ENCODE measurements at regions of chr12 and their contacts with region 1.

Region 1: DNA sequence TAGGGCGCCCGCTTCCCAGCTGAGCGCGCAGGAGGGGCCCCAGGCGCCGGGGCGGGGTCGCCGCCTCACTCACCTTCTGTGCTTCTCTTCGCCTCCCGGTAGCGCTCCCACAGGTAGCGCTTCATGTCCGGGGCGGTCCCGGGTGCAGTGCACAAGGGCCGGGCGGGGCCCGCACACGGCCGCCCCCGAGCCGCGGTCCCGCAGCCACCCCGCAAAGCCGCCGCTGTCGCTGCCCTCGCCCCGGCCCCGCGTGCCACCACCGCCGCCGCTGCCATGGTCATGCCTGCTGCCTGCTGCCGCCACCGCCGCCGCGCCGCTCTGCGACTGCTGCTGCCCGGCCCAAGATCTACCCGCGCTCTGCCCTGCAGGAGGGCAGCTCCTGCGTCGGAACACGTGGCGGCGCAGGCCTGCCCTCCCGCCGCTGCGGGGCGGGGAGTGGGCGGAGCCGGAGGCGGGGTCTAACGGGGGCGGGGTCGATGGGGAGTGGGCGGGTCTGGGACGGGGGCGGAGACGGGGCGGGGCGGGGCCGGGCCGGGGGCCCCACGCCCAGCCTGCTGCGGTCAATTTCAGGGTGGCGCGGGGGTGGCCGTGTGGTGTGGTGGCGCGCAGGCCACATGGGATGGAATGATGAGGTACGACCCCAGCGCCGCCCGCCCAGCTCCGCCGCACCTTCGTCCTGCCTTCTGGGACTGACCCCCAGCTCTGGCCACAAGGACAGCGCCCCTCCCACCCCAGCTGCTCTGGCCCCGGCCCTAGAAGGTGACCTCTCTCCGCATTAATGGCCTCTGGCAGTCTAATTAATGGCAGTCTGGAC is at the start of gene NT5DC3:
- DNase-seq: peak; percentile 91
- ATAC-seq: peak; percentile 88
- H3K4me3 Mint-ChIP-seq: peak within 1 kb of the TSS; percentile 77
- H3K27ac Mint-ChIP-seq: peak within 1 kb of the TSS; percentile 63
- H3K4me1 Mint-ChIP-seq: peaks cover 22% of the 10 kb centered on the region
- H3K27me3 Mint-ChIP-seq: no peaks in the 10 kb centered on the region
- total RNA-seq, gene NT5DC3: 7.3 to 8.9 TPM

Region 2: GRCh38 chr12:102061560-102062418 is 1779.3 kb before region 1 on chr12 and contains the start of gene WASHC3:
- CTCF ChIA-PET with region 1: no interaction called
- POLR2A ChIA-PET with region 1: no interaction called
- intact Hi-C with region 1: loop called in 1 of 2 experiments (anchors 2 kb)
- DNase-seq: peak; percentile 98
- ATAC-seq: peak; percentile 93
- H3K4me3 Mint-ChIP-seq: peak within 1 kb of the TSS; percentile 94
- H3K27ac Mint-ChIP-seq: peak within 1 kb of the TSS; percentile 99
- H3K4me1 Mint-ChIP-seq: peaks cover 29% of the 10 kb centered on the region
- H3K27me3 Mint-ChIP-seq: no peaks in the 10 kb centered on the region
- total RNA-seq, gene WASHC3: 36.1 to 64.4 TPM

Region 3: GRCh38 chr12:103930034-103930786 is 89.1 kb after region 1 on chr12 and contains the start of gene HSP90B1:
- CTCF ChIA-PET with region 1: no interaction called
- POLR2A ChIA-PET with region 1: no interaction called
- intact Hi-C with region 1: loop called (anchors 1 to 2 kb)
- DNase-seq: peak; percentile 100
- ATAC-seq: peak; percentile 75
- H3K4me3 Mint-ChIP-seq: peak within 1 kb of the TSS; percentile 77
- H3K27ac Mint-ChIP-seq: peak within 1 kb of the TSS; percentile 100
- H3K4me1 Mint-ChIP-seq: peaks cover 54% of the 10 kb centered on the region
- H3K27me3 Mint-ChIP-seq: no peaks in the 10 kb centered on the region
- total RNA-seq, gene HSP90B1: 384 to 394 TPM

Region 4: DNA sequence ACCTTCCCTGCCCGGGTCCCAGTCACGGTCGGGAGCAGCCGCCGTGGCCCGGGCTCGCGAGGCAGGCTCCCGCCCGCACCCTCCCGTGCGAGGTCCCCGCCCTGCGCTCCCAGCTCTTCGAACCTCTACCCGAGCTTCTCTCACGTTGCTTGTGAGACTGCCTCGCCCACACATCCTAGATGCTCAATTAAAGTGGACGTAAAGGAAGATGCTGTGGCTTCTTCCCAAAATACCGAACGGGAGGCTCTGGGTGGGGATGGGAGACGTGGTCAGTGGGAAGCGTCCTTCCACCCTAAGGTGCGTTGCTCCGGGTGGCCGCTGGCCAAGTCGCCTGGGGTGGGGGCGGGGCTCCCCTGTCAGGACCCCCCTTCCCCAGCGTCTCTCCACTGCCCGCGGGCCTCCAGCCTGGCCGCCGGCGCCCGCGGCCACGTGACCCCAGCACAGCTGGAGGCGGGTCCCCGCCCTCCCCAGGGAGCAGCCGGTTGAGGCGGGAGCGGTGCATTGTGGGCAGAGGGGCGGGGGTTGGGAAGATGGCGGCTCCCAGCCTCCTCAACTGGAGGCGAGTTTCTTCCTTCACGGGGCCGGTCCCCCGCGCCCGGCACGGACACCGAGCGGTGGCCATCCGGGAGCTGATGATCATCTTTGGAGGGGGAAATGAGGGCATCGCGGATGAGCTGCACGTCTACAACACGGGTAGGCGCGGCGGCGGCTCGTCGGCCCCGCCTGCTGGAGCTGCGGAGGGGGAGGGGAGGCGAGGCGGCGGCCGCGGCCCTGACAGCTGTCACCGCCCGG is 223.1 kb after region 1 on chr12 and contains the start of gene HCFC2:
- CTCF ChIA-PET with region 1: no interaction called
- POLR2A ChIA-PET with region 1: interaction called, 6 read pairs
- intact Hi-C with region 1: loop called in 1 of 2 experiments (anchors 1 kb)
- DNase-seq: peak; percentile 95
- ATAC-seq: peak; percentile 95
- H3K4me3 Mint-ChIP-seq: peak within 1 kb of the TSS; percentile 85
- H3K27ac Mint-ChIP-seq: peak within 1 kb of the TSS; percentile 89
- H3K4me1 Mint-ChIP-seq: peaks cover 20% of the 10 kb centered on the region
- H3K27me3 Mint-ChIP-seq: peaks cover 7% of the 10 kb centered on the region
- total RNA-seq, gene HCFC2: 6.4 to 6.5 TPM

Region 5: GRCh38 chr12:104286538-104287482 is 445.7 kb after region 1 on chr12:
- CTCF ChIA-PET with region 1: no interaction called
- POLR2A ChIA-PET with region 1: no interaction called
- intact Hi-C with region 1: loop called in 1 of 2 experiments (anchors 5 kb)
- DNase-seq: peak; percentile 95
- ATAC-seq: peak; percentile 84
- H3K4me3 Mint-ChIP-seq: peak overlapping the region; percentile 95
- H3K27ac Mint-ChIP-seq: peak overlapping the region; percentile 97
- H3K4me1 Mint-ChIP-seq: peaks cover 12% of the 10 kb centered on the region
- H3K27me3 Mint-ChIP-seq: no peaks in the 10 kb centered on the region

Region 6: GRCh38 chr12:104958009-104958945 is 1117.2 kb after region 1 on chr12 and contains the start of gene SLC41A2:
- CTCF ChIA-PET with region 1: no interaction called
- POLR2A ChIA-PET with region 1: no interaction called
- intact Hi-C with region 1: loop called in 1 of 2 experiments (anchors 1 kb)
- DNase-seq: peak; percentile 90
- ATAC-seq: peak; percentile 86
- H3K4me3 Mint-ChIP-seq: peak within 1 kb of the TSS; percentile 82
- H3K27ac Mint-ChIP-seq: peak within 1 kb of the TSS; percentile 92
- H3K4me1 Mint-ChIP-seq: peaks cover 27% of the 10 kb centered on the region
- H3K27me3 Mint-ChIP-seq: peaks cover 21% of the 10 kb centered on the region
- total RNA-seq, gene SLC41A2: 7.9 to 11.1 TPM

Region 7: GRCh38 chr12:105330283-105330930 is 1489.3 kb after region 1 on chr12 and contains the start of gene C12orf75:
- CTCF ChIA-PET with region 1: no interaction called
- POLR2A ChIA-PET with region 1: no interaction called
- intact Hi-C with region 1: loop called in 1 of 2 experiments (anchors 5 kb)
- DNase-seq: peak; percentile 92
- ATAC-seq: peak; percentile 92
- H3K4me3 Mint-ChIP-seq: peak within 1 kb of the TSS; percentile 78
- H3K27ac Mint-ChIP-seq: peak within 1 kb of the TSS; percentile 80
- H3K4me1 Mint-ChIP-seq: peaks cover 39% of the 10 kb centered on the region
- H3K27me3 Mint-ChIP-seq: no peaks in the 10 kb centered on the region
- total RNA-seq, gene C12orf75: 53.8 to 59.9 TPM

Measured in activated CD4-positive, alpha-beta T cell treated with anti-CD3 and anti-CD28 coated beads for 36 hours (primary cell).